B cell (primary cell): ENCODE measurements at regions of chr5 and their contacts with region 1.

Region 1: DNA sequence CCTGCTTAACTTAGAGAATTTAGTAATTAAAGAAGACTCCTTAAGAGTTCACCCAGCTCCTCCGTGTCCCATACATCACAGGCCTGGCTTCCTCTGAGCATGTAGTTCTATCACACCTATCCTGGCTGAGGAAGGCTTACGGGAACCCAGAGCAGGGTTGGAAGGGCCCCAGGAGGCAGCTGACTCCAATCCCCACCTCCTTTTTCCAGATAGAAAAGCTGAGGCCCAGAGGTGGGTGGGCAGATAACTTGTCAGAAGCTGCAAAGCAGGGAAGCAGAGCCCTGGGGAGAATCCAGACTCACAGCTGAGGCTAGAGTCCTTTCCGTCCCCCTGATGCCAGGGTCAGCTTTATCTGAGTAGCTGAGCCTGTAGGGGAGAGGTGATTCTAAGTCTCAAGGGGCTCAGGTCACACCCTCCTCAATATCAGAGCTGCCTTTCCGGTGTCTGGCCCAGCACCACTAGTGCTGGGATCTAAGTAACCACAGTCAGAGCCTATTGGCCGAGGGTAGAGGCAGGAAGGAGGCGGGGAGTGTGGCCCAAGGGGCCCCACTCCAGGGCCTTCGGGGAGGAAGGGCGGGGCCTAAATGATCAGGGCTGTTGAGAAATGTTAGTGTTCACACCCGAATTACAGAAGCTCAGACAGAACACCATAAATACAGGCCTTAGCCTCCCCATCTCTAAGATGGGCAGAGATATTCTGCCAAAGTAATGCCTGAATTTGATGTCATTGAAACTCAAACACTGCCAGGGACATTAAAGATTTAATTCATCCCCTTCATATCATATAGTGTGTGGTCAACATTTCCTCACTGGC is 9.9 kb downstream of the CCDC69 start:
- DNase-seq: peak; percentile 92
- ATAC-seq: peak; percentile 74
- H3K4me3 ChIP-seq: peak overlapping the region; percentile 35 to 58 (median 38)
- H3K4me3 Mint-ChIP-seq: peak overlapping the region; percentile 79
- H3K27ac ChIP-seq: peak overlapping the region; percentile 96 to 99
- H3K27ac Mint-ChIP-seq: peak overlapping the region; percentile 99
- H3K4me1 ChIP-seq: peaks cover 98 to 100% of the 10 kb centered on the region in 2 donors
- H3K4me1 Mint-ChIP-seq: peaks cover 90% of the 10 kb centered on the region
- H3K27me3 ChIP-seq: no peaks in the 10 kb centered on the region
- H3K27me3 Mint-ChIP-seq: no peaks in the 10 kb centered on the region
- CTCF ChIP-seq: no peak

Region 2: DNA sequence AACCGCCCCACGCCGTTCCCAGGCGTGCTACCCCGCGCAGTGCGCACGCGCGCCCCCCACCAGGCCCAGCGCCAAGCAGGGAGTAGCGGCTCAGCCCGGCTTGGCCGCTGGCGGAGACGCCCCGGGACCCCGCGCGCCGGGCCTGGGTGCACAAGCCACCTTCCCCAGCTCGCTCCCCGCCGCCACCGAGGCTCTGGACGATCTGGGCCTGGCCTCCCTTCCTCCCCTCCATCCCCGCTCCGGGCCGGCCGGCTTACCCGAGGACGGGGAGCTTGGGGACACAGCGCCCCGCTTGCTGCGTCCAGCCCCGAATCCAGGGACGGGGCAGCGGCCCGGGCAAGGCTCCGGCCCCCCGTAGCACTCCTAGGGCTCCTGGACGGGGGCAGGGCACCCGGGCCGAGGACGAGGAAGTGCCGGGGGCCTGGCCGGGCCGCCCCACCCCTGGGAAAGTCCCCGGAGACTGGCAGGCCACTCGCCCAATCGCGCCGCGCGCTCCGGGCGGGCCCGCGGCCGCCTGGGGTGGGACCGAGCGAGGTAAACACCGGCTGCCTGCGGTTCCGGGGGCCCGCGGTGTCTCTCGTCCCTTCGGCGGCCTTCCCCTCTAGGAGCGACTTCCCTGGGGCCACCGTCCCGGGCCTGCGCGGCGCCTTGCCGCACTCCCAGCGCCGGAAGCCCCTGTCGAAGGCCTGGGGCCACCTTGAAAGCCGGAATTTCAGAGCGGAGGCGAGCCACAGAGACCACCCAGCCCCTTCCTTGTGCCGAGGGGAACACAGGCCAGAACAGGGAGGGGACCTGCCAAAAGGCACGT is 133.2 kb before region 1 on chr5 and contains the start of gene TNIP1:
- CTCF ChIA-PET with region 1: no interaction called
- POLR2A ChIA-PET with region 1: interaction called, 11 read pairs
- intact Hi-C with region 1: no loop called
- DNase-seq: peak; percentile 96
- ATAC-seq: peak; percentile 88
- H3K4me3 ChIP-seq: peak within 1 kb of the TSS; percentile 71 to 96 (median 85)
- H3K4me3 Mint-ChIP-seq: peak within 1 kb of the TSS; percentile 87
- H3K27ac ChIP-seq: peak within 1 kb of the TSS; percentile 96 to 100
- H3K27ac Mint-ChIP-seq: peak within 1 kb of the TSS; percentile 88
- H3K4me1 ChIP-seq: peaks cover 83 to 84% of the 10 kb centered on the region in 2 donors
- H3K4me1 Mint-ChIP-seq: peaks cover 82% of the 10 kb centered on the region
- H3K27me3 ChIP-seq: no peaks in the 10 kb centered on the region
- H3K27me3 Mint-ChIP-seq: no peaks in the 10 kb centered on the region
- CTCF ChIP-seq: no peak
- total RNA-seq, gene TNIP1: 294 and 295 TPM in 2 replicates

Region 3: GRCh38 chr5:151157426-151158286 is 56.4 kb before region 1 on chr5 and contains the start of gene ANXA6:
- CTCF ChIA-PET with region 1: no interaction called
- POLR2A ChIA-PET with region 1: interaction called, 5 read pairs
- intact Hi-C with region 1: loop called (anchors 5 kb)
- DNase-seq: peak; percentile 72
- ATAC-seq: peak; percentile 77
- H3K4me3 ChIP-seq: peak within 1 kb of the TSS; percentile 87 to 93 (median 89)
- H3K4me3 Mint-ChIP-seq: peak within 1 kb of the TSS; percentile 97
- H3K27ac ChIP-seq: peak within 1 kb of the TSS; percentile 76 to 91
- H3K27ac Mint-ChIP-seq: peak within 1 kb of the TSS; percentile 97
- H3K4me1 ChIP-seq: peaks cover 63 to 74% of the 10 kb centered on the region in 2 donors
- H3K4me1 Mint-ChIP-seq: peaks cover 73% of the 10 kb centered on the region
- H3K27me3 ChIP-seq: no peaks in the 10 kb centered on the region
- H3K27me3 Mint-ChIP-seq: no peaks in the 10 kb centered on the region
- CTCF ChIP-seq: no peak
- total RNA-seq, gene ANXA6: 300 and 316 TPM in 2 replicates

Region 4: DNA sequence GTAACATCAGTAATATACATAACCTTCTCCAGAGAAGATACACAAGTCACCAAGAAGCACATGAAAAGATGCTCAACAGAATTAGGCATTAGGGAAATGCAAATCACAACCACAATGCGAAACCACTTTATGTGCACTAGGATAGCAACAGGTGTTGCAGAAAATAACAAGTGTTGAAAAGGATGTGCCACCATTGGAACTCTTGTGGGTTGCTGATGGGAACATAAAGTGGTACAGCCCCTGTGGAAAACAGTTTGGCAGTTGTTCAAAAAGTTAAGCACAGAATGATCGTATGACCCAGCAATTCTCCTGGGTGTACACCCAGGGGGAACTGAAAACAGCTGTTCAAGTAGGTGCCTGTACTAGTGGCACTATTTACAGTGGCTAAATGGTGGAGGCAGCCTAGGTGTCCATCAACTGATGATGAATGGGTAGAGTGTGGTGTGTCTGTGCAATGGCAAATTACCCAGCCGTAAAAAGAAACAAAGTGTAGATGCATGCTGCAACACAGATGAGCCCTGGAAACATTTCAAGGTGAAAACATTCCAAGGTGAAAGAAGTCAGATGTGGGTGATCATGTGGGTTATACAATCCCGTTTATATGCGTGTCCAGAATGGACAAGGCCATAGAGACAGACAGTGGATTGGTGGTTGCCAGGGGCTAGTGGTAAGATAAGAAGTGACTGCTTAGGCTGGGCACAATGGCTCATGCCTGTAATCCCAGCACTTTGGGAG is 17.3 kb before region 1 on chr5:
- CTCF ChIA-PET with region 1: interaction called, 8 read pairs
- POLR2A ChIA-PET with region 1: interaction called, 8 read pairs
- intact Hi-C with region 1: loop called (anchors 1 kb)
- DNase-seq: peak; percentile 82
- ATAC-seq: peak; percentile 95
- H3K4me3 ChIP-seq: no peak overlapping the region
- H3K4me3 Mint-ChIP-seq: peak overlapping the region; percentile 67
- H3K27ac ChIP-seq: peak overlapping the region; percentile 61 to 67
- H3K27ac Mint-ChIP-seq: peak overlapping the region; percentile 97
- H3K4me1 ChIP-seq: peaks cover 41 to 55% of the 10 kb centered on the region in 2 donors
- H3K4me1 Mint-ChIP-seq: peaks cover 63% of the 10 kb centered on the region
- H3K27me3 ChIP-seq: no peaks in the 10 kb centered on the region
- H3K27me3 Mint-ChIP-seq: no peaks in the 10 kb centered on the region
- CTCF ChIP-seq: no peak

Region 5: GRCh38 chr5:151202381-151203139 is 11.4 kb before region 1 on chr5:
- CTCF ChIA-PET with region 1: interaction called, 8 read pairs
- POLR2A ChIA-PET with region 1: interaction called, 8 read pairs
- intact Hi-C with region 1: loop called (anchors 1 kb)
- DNase-seq: peak; percentile 58
- ATAC-seq: peak; percentile 56
- H3K4me3 ChIP-seq: no peak overlapping the region
- H3K4me3 Mint-ChIP-seq: peak overlapping the region; percentile 67
- H3K27ac ChIP-seq: peak overlapping the region; percentile 7 to 74
- H3K27ac Mint-ChIP-seq: peak overlapping the region; percentile 75
- H3K4me1 ChIP-seq: peaks cover 27 to 37% of the 10 kb centered on the region in 2 donors
- H3K4me1 Mint-ChIP-seq: peaks cover 55% of the 10 kb centered on the region
- H3K27me3 ChIP-seq: no peaks in the 10 kb centered on the region
- H3K27me3 Mint-ChIP-seq: no peaks in the 10 kb centered on the region
- CTCF ChIP-seq: no peak

Region 6: GRCh38 chr5:151233616-151234085 is 19.6 kb after region 1 on chr5:
- CTCF ChIA-PET with region 1: interaction called, 299 read pairs
- POLR2A ChIA-PET with region 1: interaction called, 29 read pairs
- intact Hi-C with region 1: loop called (anchors 1 kb)
- DNase-seq: peak; percentile 67
- ATAC-seq: peak; percentile 52
- H3K4me3 ChIP-seq: peak overlapping the region in 3 of 5 experiments; percentile 2 to 32 (median 31)
- H3K4me3 Mint-ChIP-seq: peak overlapping the region; percentile 89
- H3K27ac ChIP-seq: peak overlapping the region; percentile 69 to 92
- H3K27ac Mint-ChIP-seq: peak overlapping the region; percentile 95
- H3K4me1 ChIP-seq: peaks cover 67 to 72% of the 10 kb centered on the region in 2 donors
- H3K4me1 Mint-ChIP-seq: peaks cover 76% of the 10 kb centered on the region
- H3K27me3 ChIP-seq: no peaks in the 10 kb centered on the region
- H3K27me3 Mint-ChIP-seq: no peaks in the 10 kb centered on the region
- CTCF ChIP-seq: no peak

Region 7: DNA sequence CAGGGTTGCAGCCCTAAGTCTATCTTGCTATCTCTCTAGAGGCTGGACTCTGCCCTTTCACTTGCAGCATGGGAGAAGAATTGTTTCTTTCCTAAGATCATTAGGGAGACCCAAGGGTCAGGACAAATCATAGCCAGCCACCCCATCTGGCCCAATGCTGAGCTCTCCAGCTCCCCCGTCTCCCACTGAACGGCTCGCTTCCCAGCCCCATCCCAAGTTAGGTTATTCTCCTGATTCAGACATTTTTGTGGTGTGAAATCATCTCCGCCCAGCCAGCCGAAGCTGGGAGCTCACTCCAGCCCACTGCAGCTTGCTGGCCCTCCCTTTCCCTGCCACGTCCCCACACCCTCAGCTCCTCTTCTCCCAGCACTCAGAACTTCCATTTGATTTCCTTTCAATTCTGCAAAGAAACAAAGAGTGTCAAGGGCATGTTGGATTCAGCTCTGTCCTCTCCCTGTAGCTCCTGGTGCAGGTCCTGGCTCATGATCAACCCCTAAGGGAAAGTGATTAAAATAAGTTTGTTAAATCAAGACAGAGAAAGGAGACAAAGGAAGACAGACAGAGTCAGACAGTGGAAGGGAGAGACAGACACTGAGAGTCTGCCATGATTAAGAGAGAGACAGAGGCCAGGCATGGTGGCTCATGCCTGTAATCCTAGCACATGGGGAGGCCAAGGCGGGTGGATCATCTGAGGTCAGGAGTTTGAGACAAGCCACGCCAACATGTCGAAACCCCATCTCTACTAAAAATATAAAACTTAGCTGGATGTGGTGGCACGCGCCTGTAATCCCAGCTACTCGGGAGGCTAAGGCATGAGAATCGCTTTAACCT is 485.3 kb after region 1 on chr5:
- CTCF ChIA-PET with region 1: no interaction called
- POLR2A ChIA-PET with region 1: no interaction called
- intact Hi-C with region 1: no loop called
- DNase-seq: no peak
- ATAC-seq: no peak
- H3K4me3 ChIP-seq: no peak overlapping the region
- H3K4me3 Mint-ChIP-seq: no peak overlapping the region
- H3K27ac ChIP-seq: no peak overlapping the region
- H3K27ac Mint-ChIP-seq: no peak overlapping the region
- H3K4me1 ChIP-seq: peaks cover 0 to 4% of the 10 kb centered on the region in 2 donors
- H3K4me1 Mint-ChIP-seq: peaks cover 13% of the 10 kb centered on the region
- H3K27me3 ChIP-seq: no peaks in the 10 kb centered on the region
- H3K27me3 Mint-ChIP-seq: no peaks in the 10 kb centered on the region
- CTCF ChIP-seq: no peak

Region 8: GRCh38 chr5:152007585-152008335 is 793.8 kb after region 1 on chr5:
- CTCF ChIA-PET with region 1: no interaction called
- POLR2A ChIA-PET with region 1: no interaction called
- intact Hi-C with region 1: no loop called
- DNase-seq: no peak
- ATAC-seq: no peak
- H3K4me3 ChIP-seq: no peak overlapping the region
- H3K4me3 Mint-ChIP-seq: no peak overlapping the region
- H3K27ac ChIP-seq: no peak overlapping the region
- H3K27ac Mint-ChIP-seq: no peak overlapping the region
- H3K4me1 ChIP-seq: no peaks in the 10 kb centered on the region
- H3K4me1 Mint-ChIP-seq: no peaks in the 10 kb centered on the region
- H3K27me3 ChIP-seq: no peaks in the 10 kb centered on the region
- H3K27me3 Mint-ChIP-seq: peaks cover 6% of the 10 kb centered on the region
- CTCF ChIP-seq: no peak